Activated T-helper 2 cell treated with anti-CD3 and anti-CD28 coated beads, Interferon-gamma antibody, Interleukin-2, Interleukin-4, amounts not matched to agents 10 μg/mL and 5 μg/mL and 100 μg/mL, durations not matched to agents 14 hours and 24 hours and 36 hours (primary cell): ENCODE measurements at regions of chr16 and their contacts with region 1.

Region 1: GRCh38 chr16:87487361-87488001 is 5.3 kb downstream of the ZCCHC14 start:
- DNase-seq: no peak
- H3K4me3 Mint-ChIP-seq: no peak overlapping the region
- H3K27ac Mint-ChIP-seq: no peak overlapping the region
- H3K4me1 Mint-ChIP-seq: peaks cover 65% of the 10 kb centered on the region
- H3K27me3 Mint-ChIP-seq: peaks cover 5% of the 10 kb centered on the region

Region 2: GRCh38 chr16:87435372-87436224 is 51.9 kb before region 1 on chr16:
- intact Hi-C with region 1: loop called (anchors 10 kb)
- DNase-seq: no peak
- H3K4me3 Mint-ChIP-seq: no peak overlapping the region
- H3K27ac Mint-ChIP-seq: no peak overlapping the region
- H3K4me1 Mint-ChIP-seq: peaks cover 10% of the 10 kb centered on the region
- H3K27me3 Mint-ChIP-seq: peaks cover 7% of the 10 kb centered on the region

Region 3: GRCh38 chr16:87447323-87447722 is 40.2 kb before region 1 on chr16:
- intact Hi-C with region 1: no loop called
- DNase-seq: no peak
- H3K4me3 Mint-ChIP-seq: no peak overlapping the region
- H3K27ac Mint-ChIP-seq: no peak overlapping the region
- H3K4me1 Mint-ChIP-seq: peaks cover 10% of the 10 kb centered on the region
- H3K27me3 Mint-ChIP-seq: no peaks in the 10 kb centered on the region

Region 4: DNA sequence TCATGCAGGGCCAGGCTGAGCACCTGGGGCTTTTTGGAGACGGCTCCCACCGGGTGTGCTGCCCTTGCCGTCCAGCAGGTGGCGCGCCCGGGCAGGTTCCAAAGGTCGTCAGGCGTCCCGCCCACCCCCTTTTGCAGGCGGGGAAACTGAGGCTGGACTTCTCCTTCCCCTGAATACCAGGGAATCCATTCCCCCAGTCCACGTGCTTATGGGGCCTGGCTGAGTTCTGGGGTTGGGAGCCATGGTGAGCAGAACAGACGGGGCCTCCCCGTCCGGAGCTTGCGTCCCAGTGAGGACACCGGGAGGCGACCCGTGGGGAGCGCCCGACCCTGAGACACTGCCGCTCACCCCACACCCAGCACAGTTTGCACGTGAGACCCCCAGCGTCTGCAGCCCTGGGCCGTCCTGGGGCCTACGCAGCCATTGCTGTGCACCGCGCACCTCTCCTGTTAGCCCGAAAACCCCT is 63.0 kb after region 1 on chr16:
- intact Hi-C with region 1: no loop called
- DNase-seq: peak; percentile 32
- H3K4me3 Mint-ChIP-seq: no peak overlapping the region
- H3K27ac Mint-ChIP-seq: no peak overlapping the region
- H3K4me1 Mint-ChIP-seq: peaks cover 4% of the 10 kb centered on the region
- H3K27me3 Mint-ChIP-seq: peaks cover 11% of the 10 kb centered on the region

Region 5: GRCh38 chr16:87744750-87745514 is 257.5 kb after region 1 on chr16:
- intact Hi-C with region 1: no loop called
- DNase-seq: no peak
- H3K4me3 Mint-ChIP-seq: no peak overlapping the region
- H3K27ac Mint-ChIP-seq: no peak overlapping the region
- H3K4me1 Mint-ChIP-seq: peaks cover 4% of the 10 kb centered on the region
- H3K27me3 Mint-ChIP-seq: no peaks in the 10 kb centered on the region